ENCODE measurements at regions of chr2 and their contacts with region 1.

Region 1: GRCh38 chr2:239747274-239747673 is 277.9 kb downstream of the NDUFA10 start:
- DNase-seq: no peak
- H3K4me3 ChIP-seq: no peak overlapping the region
- H3K27ac ChIP-seq: no peak overlapping the region
- H3K27me3 ChIP-seq: no peaks in the 10 kb centered on the region
- CTCF ChIP-seq: no peak

Region 2: DNA sequence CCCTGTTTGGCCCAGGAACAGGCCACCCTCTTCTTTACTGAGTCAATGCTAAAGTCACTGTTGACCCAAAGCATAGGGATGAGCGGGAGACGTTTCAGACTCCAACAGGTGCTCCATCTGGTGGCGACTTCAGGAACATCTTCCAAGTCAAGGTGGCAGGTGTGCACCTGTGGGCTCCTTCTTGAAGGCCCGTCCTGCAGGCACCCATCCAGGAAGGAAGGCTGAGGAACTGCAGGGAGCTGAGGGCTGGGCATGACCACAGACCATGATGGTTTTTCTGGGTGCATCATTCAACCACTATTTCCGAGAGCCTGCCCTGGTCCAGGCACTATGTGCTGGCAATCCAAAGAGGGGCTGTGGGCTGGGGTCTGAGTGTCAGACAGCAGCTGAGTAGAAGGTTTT is 135.1 kb after region 1 on chr2:
- intact Hi-C with region 1: loop called in 1 of 2 experiments (anchors 10 kb)
- DNase-seq: peak in 5 of 10 donors; percentile 23 to 55 (median 44)
- H3K4me3 ChIP-seq: no peak overlapping the region
- H3K27ac ChIP-seq: no peak overlapping the region
- H3K27me3 ChIP-seq: no peaks in the 10 kb centered on the region
- CTCF ChIP-seq: peak; percentile 29 to 77 (median 64)